Left ventricle myocardium superior (tissue), 1 donor: ENCODE measurements at regions of chr17 and their contacts with region 1.

Region 1: DNA sequence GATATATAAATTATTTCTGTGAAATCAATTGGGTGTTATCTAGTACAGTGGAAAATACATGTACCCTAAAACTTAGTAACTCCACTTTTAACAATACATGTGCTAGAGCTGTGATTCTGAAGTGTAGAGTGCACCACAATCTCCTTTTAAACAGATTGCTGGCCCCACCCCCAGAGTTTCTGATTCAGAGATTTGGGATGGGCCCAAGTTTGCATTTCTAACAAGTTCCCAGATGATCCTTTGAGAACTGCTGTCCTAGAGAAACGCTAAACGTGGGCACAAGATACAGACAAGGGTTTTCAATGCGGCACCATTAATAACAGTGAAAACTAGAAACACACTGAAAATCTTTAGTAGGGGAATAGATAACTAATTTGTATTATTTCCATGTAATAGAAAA is 49.2 kb downstream of the NXPH3 start:
- DNase-seq: no peak
- ATAC-seq: no peak

Region 2: GRCh38 chr17:49422714-49423113 is 202.2 kb before region 1 on chr17:
- intact Hi-C with region 1: no loop called
- DNase-seq: no peak
- ATAC-seq: no peak

Region 3: DNA sequence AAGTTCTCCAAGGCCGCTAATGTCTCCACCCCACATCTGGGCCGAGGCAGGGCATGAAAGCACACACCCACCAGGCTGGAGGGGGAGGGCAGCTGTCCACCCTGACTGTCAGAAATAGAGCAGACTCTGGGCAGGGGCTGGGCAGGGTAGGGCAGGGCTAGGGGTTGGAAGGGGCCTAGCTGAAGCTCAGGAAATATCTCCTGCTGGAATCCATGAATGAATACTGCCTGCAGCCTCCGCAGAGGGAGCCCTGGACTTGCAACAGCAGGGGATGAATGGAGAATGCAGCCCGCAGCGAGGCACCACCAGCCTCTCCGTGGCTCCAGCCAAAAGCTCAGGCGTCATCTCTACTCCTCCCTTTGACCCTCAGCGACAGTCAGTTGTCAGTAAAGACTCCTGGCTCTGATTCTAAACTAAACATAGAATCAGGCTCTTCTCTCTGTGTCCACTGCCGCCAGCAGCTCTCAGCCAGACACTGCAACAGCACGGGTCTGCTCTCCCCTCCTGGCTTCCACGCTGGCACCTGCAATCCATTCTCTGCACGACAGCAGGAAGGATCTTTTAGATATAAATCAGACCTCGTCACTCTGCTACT is 153.7 kb before region 1 on chr17:
- intact Hi-C with region 1: no loop called
- DNase-seq: peak; percentile 68
- ATAC-seq: peak; percentile 90

Region 4: GRCh38 chr17:49670641-49671040 is 45.7 kb after region 1 on chr17:
- intact Hi-C with region 1: loop called (anchors 5 kb)
- DNase-seq: no peak
- ATAC-seq: no peak